A673 (cell line): ENCODE measurements at regions of chr22 and their contacts with region 1.

Region 1: DNA sequence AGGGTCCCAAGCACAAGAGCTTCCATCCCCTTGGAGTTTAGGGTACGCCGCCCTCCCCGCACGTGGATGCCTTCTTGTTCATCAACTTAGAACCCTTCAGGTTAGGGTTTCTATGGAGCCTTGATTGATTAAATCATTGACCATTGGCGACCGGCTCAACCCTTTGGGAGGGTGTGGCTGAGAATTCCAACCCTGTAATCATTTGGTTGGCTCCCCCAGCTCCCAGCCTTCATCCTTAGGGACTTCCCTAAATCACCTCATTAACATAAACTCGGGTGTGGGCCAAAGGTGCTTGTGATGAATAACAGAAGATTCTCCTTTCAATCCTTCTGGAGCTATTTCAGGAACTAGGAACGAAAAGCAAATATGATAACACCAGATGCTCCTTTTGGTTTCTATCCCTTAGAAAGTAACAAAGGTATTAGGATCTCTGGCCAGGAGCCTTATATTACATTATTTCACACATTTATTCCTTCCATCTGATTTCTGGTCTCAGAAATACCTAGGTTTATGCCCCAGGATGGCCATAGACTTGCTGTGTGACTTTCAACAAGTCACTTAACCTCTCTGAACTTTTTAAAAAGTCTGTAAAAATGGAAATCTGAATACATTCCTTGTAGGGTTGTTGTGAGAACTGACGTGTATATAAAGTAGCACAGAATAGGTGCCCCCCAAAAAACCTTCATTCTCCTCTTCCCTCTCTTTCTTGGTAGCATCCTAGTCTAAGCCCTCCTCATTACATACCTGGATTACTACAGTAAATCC is 26.8 kb downstream of the MCHR1 start:
- DNase-seq: no peak
- H3K4me3 ChIP-seq: no peak overlapping the region
- H3K27ac ChIP-seq: no peak overlapping the region
- H3K4me1 ChIP-seq: peaks cover 9% of the 10 kb centered on the region
- H3K27me3 ChIP-seq: no peaks in the 10 kb centered on the region
- CTCF ChIP-seq: no peak

Region 2: GRCh38 chr22:40732999-40733292 is 26.8 kb after region 1 on chr22:
- CTCF ChIA-PET with region 1: interaction called, 12 read pairs
- POLR2A ChIA-PET with region 1: no interaction called
- intact Hi-C with region 1: no loop called
- DNase-seq: no peak
- H3K4me3 ChIP-seq: no peak overlapping the region
- H3K27ac ChIP-seq: no peak overlapping the region
- H3K4me1 ChIP-seq: peaks cover 20% of the 10 kb centered on the region
- H3K27me3 ChIP-seq: no peaks in the 10 kb centered on the region
- CTCF ChIP-seq: no peak

Region 3: DNA sequence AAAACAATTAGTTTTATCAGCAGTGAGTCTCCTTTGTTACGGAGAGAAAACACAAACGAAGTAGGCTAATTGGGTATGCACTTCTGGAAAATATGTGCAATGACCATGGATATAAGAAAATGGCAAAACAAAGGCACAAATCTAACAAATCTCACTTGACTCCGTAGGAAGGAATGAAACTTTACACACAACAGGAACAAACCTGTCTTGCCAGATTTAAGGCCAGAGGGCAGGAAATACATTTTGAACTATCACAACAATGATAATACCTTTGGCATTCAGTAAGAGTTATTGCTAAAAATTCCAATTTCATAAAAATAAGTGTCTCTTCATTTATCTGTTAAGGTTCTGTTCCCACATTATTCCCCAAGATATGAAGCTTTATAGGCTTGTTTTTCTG is 76.4 kb after region 1 on chr22:
- CTCF ChIA-PET with region 1: no interaction called
- POLR2A ChIA-PET with region 1: no interaction called
- intact Hi-C with region 1: no loop called
- DNase-seq: no peak
- H3K4me3 ChIP-seq: no peak overlapping the region
- H3K27ac ChIP-seq: no peak overlapping the region
- H3K4me1 ChIP-seq: no peaks in the 10 kb centered on the region
- H3K27me3 ChIP-seq: no peaks in the 10 kb centered on the region
- CTCF ChIP-seq: no peak